Thyroid gland (tissue), 4 donors: ENCODE measurements at regions of chr11 and their contacts with region 1.

Region 1: GRCh38 chr11:33375688-33376311 is 118.6 kb downstream of the HIPK3 start:
- DNase-seq: no peak
- H3K4me3 ChIP-seq: peak within 1 kb of the TSS in 1 of 3 donors; percentile 31
- H3K27ac ChIP-seq: no peak within 1 kb of the TSS
- H3K4me1 ChIP-seq: peaks cover 4 to 9% of the 10 kb centered on the region in 2 donors
- H3K27me3 ChIP-seq: no peaks in the 10 kb centered on the region
- CTCF ChIP-seq: no peak
- POLR2A ChIP-seq: no peak

Region 2: GRCh38 chr11:33195462-33196173 is 180.2 kb before region 1 on chr11:
- intact Hi-C with region 1: no loop called
- DNase-seq: peak; percentile 22 to 32
- H3K4me3 ChIP-seq: no peak overlapping the region
- H3K27ac ChIP-seq: no peak overlapping the region
- H3K4me1 ChIP-seq: no peaks in the 10 kb centered on the region
- H3K27me3 ChIP-seq: no peaks in the 10 kb centered on the region
- CTCF ChIP-seq: no peak
- POLR2A ChIP-seq: no peak

Region 3: GRCh38 chr11:33234397-33235190 is 141.2 kb before region 1 on chr11:
- intact Hi-C with region 1: no loop called
- DNase-seq: no peak
- H3K4me3 ChIP-seq: no peak overlapping the region
- H3K27ac ChIP-seq: no peak overlapping the region
- H3K4me1 ChIP-seq: peaks cover 0 to 12% of the 10 kb centered on the region in 2 donors
- H3K27me3 ChIP-seq: no peaks in the 10 kb centered on the region
- CTCF ChIP-seq: no peak
- POLR2A ChIP-seq: no peak

Region 4: GRCh38 chr11:33829433-33830141 is 453.8 kb after region 1 on chr11:
- intact Hi-C with region 1: loop called (anchors 10 kb)
- DNase-seq: peak; percentile 54 to 58
- H3K4me3 ChIP-seq: peak overlapping the region in 2 of 3 donors; percentile 15 to 23
- H3K27ac ChIP-seq: no peak overlapping the region
- H3K4me1 ChIP-seq: peaks cover 9 to 10% of the 10 kb centered on the region in 2 donors
- H3K27me3 ChIP-seq: peaks cover 9% of the 10 kb centered on the region
- CTCF ChIP-seq: peak; percentile 18 to 75 (median 67)
- POLR2A ChIP-seq: no peak